PC-9 (cell line): ENCODE measurements at regions of chr3 and their contacts with region 1.

Region 1: DNA sequence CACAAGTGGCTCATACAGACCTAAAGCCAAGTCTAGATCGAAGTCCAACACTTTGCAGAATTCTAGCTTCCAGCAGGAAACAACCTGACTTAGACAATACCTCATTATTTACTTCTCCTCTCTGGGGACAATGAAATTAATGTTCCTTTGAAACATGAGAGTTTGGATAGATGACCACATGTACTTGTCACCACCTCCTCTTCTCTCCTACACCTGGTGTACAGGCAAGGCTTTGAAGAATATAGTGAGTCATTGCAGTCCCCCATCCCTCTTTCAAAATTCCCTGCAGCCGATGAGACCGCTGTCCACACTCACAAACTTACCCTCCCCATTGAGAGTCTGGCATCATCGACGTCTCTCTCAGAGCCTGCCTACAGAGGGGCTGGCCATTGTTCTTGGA is 189.0 kb upstream of the HES1 start:
- DNase-seq: peak; percentile 83 to 87
- H3K4me3 ChIP-seq: no peak overlapping the region
- H3K27ac ChIP-seq: no peak overlapping the region
- H3K4me1 ChIP-seq: peaks cover 16% of the 10 kb centered on the region
- H3K27me3 ChIP-seq: no peaks in the 10 kb centered on the region
- CTCF ChIP-seq: no peak

Region 2: DNA sequence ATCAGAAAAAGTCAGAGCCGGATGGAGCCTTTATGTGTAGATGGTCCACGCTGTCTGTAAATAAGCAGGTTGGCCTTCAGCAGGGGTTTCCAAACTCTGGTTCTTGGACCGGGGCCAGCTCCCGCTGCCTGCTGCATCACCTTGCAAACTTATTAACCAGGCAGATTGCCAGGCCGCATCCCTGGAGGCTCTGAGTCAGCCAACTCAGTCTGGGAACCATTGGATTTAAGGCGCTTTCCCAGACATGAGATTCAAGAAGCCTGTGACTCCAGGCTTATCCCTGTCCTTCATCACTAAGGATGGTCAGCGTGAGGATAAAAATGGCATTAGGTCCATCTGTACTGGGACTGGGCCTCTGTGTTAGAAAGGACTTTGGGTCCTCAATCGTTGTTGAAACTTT is 141.4 kb before region 1 on chr3:
- CTCF ChIA-PET with region 1: no interaction called
- POLR2A ChIA-PET with region 1: interaction called, 13 read pairs
- intact Hi-C with region 1: no loop called
- DNase-seq: peak; percentile 95 to 98
- H3K4me3 ChIP-seq: no peak overlapping the region
- H3K27ac ChIP-seq: peak overlapping the region; percentile 61
- H3K4me1 ChIP-seq: peaks cover 21% of the 10 kb centered on the region
- H3K27me3 ChIP-seq: no peaks in the 10 kb centered on the region
- CTCF ChIP-seq: no peak

Region 3: DNA sequence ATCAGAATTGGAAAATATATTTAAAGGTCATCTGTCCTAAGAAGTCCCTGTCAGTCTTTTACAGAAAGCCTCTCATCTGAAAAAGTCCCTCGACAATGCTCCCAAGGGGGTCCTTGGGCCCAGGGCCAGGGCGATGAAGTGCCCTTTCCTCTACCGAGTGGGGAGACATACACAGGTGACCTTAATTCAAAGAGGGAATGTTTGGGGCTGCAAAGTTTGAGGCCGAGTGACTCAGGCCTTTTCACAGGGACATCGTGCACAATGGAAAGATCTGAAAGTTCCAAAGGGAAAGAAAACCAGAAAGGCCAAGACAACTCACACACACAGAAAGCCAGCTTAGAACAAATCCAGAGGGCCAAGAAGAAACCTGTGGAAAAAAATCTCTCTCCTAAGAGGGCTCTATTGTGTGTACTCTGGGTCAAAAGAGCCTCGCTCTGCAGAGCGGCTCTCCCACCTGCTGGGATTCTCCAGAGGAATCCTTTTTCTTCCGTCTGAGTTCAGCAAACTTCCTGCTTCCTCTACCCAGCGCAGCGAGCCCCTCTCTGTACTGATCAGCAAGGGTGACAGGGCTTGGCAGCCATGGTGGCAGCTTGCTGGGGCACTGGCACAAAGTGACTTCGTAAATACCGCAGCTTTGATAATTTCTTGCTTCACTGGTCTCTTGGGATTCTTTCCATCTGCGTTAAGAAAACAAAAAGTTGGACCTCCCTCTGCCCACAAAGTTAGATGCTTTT is 94.8 kb before region 1 on chr3:
- CTCF ChIA-PET with region 1: no interaction called
- POLR2A ChIA-PET with region 1: no interaction called
- intact Hi-C with region 1: loop called (anchors 1 kb)
- DNase-seq: peak; percentile 82 to 98
- H3K4me3 ChIP-seq: peak overlapping the region; percentile 49
- H3K27ac ChIP-seq: peak overlapping the region; percentile 98
- H3K4me1 ChIP-seq: peaks cover 70% of the 10 kb centered on the region
- H3K27me3 ChIP-seq: no peaks in the 10 kb centered on the region
- CTCF ChIP-seq: no peak

Region 4: GRCh38 chr3:193910886-193911738 is 35.8 kb before region 1 on chr3:
- CTCF ChIA-PET with region 1: no interaction called
- POLR2A ChIA-PET with region 1: interaction called, 4 read pairs
- intact Hi-C with region 1: loop called (anchors 1 kb)
- DNase-seq: peak; percentile 63 to 94
- H3K4me3 ChIP-seq: no peak overlapping the region
- H3K27ac ChIP-seq: peak overlapping the region; percentile 69
- H3K4me1 ChIP-seq: peaks cover 26% of the 10 kb centered on the region
- H3K27me3 ChIP-seq: no peaks in the 10 kb centered on the region
- CTCF ChIP-seq: no peak

Region 5: GRCh38 chr3:193982258-193982659 is 35.3 kb after region 1 on chr3:
- CTCF ChIA-PET with region 1: no interaction called
- POLR2A ChIA-PET with region 1: no interaction called
- intact Hi-C with region 1: loop called (anchors 1 kb)
- DNase-seq: peak in 1 of 2 experiments; percentile 97
- H3K4me3 ChIP-seq: no peak overlapping the region
- H3K27ac ChIP-seq: no peak overlapping the region
- H3K4me1 ChIP-seq: 0 out of 2 replicates have a peak, but pooled peaks cover 6% of the 10 kb centered on the region
- H3K27me3 ChIP-seq: no peaks in the 10 kb centered on the region
- CTCF ChIP-seq: no peak

Region 6: DNA sequence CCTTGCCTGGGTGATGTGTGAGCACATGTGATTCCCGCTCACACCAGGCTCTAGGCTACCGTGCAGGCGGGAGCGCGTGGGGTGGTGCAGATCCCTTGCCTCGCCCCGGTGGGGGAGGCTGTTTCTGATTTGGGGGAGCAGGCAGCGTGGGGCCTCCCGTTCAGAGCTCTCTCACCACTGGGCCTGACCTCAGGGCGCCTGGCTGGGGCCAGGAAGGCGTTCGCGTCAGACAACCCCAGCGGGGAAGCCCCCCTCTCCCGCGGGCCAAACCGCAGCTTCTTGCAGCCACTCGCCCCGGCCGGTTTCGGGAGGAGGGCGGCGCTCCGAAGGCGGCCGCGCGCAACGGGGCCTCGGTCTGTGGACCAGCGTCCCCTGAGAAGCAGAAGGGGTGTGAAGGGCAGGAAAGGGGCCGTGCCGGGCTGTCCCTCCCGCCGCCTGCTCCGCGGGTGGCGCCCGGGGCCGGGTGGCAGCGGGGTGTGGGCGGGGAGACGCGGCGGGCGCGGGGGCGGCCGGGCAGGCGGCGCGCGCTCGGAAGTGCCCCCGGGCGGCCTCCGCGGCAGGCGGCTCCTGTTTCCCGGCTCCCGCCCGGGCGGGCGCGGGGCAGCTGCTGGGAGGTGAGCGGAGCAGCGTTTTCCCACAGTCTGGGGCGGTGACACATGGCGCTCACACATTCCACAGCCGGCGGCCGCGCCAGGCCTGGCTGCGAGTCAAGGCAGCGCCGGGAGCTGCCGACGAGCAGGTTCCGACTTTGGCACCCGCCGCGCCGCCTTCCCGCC is 123.9 kb after region 1 on chr3:
- CTCF ChIA-PET with region 1: no interaction called
- POLR2A ChIA-PET with region 1: no interaction called
- intact Hi-C with region 1: loop called (anchors 2 kb)
- DNase-seq: peak; percentile 92 to 97
- H3K4me3 ChIP-seq: peak overlapping the region; percentile 59; the same call in 1 of the 2 replicates
- H3K27ac ChIP-seq: peak overlapping the region; percentile 74
- H3K4me1 ChIP-seq: peaks cover 47% of the 10 kb centered on the region
- H3K27me3 ChIP-seq: no peaks in the 10 kb centered on the region
- CTCF ChIP-seq: no peak

Region 7: DNA sequence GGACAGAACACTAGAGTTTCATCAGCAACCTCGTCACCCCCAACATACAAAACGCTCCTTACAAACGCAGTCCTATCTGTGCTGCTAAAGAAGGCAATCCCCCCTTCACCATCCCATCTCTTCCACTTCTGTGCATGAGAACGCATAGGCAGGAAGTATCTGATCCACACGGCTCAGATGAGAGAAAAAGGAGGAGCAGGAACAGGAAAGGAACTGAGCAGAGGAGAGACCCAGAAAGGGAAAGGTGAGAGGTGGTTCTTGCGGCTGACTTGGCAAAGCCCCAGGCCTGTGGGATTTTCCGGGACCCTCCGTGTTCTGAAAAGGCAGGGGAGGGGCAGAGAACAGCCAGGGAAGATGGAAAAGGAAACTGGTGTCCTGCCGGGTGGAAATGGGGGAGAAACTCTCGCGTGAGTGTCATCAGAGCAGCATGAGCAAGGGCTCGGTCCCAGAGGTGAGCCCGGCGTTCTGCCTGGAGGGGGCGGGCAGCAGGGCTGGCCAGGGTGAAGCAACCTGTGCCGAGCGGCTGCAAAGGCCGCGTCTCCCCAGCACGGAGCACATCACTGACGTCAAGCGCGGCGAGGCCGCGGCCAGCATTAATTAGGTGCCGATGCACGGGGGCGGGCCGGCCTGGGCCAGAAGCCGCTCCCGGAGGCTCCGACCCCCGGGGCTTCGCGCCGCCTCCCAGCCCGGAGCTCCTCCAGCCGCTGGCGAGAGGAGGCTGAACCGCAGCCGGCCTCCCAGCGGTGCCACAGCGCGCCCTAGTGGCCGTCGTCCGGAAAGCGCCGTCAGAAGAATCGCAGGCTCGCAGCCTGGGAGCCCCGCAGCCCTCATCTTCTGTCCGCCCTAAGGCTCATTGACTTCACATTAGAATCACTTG is 368.4 kb after region 1 on chr3:
- CTCF ChIA-PET with region 1: interaction called, 4 read pairs
- POLR2A ChIA-PET with region 1: no interaction called
- intact Hi-C with region 1: loop called (anchors 5 kb)
- DNase-seq: peak; percentile 91 to 97
- H3K4me3 ChIP-seq: peak overlapping the region; percentile 51
- H3K27ac ChIP-seq: peak overlapping the region; percentile 75
- H3K4me1 ChIP-seq: peaks cover 27% of the 10 kb centered on the region
- H3K27me3 ChIP-seq: no peaks in the 10 kb centered on the region
- CTCF ChIP-seq: peak; percentile 99